Activated T-helper 2 cell treated with anti-CD3 and anti-CD28 coated beads, Interferon-gamma antibody, Interleukin-2, Interleukin-4, amounts not matched to agents 10 μg/mL and 5 μg/mL and 100 μg/mL, durations not matched to agents 14 hours and 24 hours and 36 hours (primary cell): ENCODE measurements at regions of chr11 and their contacts with region 1.

Region 1: DNA sequence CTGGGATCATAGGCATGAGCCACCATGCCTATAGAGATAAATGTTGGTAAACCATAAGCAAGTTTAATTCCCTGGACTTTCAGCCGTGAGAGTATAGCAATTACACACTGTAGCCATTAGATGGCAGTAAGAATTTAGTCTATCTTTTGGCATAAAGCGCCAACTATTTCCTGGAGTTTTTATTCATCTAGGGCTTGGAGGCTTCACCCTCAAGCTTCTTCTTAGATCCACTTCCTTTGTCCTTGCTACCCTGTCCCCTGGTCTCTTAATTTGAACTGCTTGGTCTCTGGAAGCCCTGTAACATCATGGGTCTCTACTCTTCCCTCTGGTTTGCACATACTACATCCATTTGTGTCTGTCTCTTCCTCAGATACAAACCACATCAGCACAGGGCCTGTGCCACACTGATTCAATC is 38.2 kb downstream of the OR10A6 start:
- DNase-seq: no peak
- H3K4me3 Mint-ChIP-seq: no peak overlapping the region
- H3K27ac Mint-ChIP-seq: no peak overlapping the region
- H3K4me1 Mint-ChIP-seq: peaks cover 4% of the 10 kb centered on the region
- H3K27me3 Mint-ChIP-seq: peaks cover 7% of the 10 kb centered on the region

Region 2: DNA sequence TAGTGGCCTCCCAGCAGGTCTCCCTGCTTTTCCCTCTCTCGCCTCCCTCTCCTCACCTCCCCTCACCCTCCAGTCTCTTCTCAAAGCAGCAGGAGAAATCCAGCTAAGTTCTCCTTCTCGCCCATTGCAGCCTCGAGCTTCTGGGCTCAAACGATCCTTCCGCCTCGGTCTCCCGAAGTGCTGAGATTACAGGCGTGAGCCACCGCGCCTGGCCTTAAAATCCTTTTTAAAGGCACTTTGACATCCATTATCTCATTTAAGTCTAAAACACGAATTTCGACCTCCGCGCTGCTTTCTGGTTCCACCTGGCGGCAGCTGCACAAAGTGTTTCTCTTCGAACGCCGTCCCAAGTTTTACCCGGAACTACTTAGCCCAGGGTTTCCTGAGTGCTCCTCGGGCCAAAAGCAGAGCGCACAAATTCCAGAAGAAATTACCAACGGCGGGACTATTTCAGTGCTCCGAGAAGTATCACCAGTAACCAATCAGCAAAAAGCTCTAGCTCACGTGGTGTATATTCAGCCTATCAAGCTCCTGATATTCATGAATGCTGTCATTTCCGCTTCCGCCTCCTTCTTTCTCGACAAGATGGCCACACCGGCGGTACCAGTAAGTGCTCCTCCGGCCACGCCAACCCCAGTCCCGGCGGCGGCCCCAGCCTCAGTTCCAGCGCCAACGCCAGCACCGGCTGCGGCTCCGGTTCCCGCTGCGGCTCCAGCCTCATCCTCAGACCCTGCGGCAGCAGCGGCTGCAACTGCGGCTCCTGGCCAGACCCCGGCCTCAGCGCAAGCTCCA is 94.1 kb after region 1 on chr11 and contains the start of gene EIF3F:
- intact Hi-C with region 1: loop called (anchors 1 kb)
- DNase-seq: peak; percentile 91
- H3K4me3 Mint-ChIP-seq: peak within 1 kb of the TSS; percentile 98
- H3K27ac Mint-ChIP-seq: peak within 1 kb of the TSS; percentile 91
- H3K4me1 Mint-ChIP-seq: peaks cover 32% of the 10 kb centered on the region
- H3K27me3 Mint-ChIP-seq: no peaks in the 10 kb centered on the region
- total RNA-seq, gene EIF3F: 237 and 239 TPM in 2 replicates